A549 (cell line): ENCODE measurements at regions of chr15 and their contacts with region 1.

Region 1: GRCh38 chr15:89101302-89102191 is 13.3 kb downstream of the ABHD2 start:
- DNase-seq: peak; percentile 97 to 98
- ATAC-seq: peak; percentile 92 to 93
- H3K4me3 ChIP-seq: no peak overlapping the region; the same call in 2 of the 3 replicates
- H3K27ac ChIP-seq: peak overlapping the region; percentile 85 to 88
- H3K4me1 ChIP-seq: peaks cover 99% of the 10 kb centered on the region
- CTCF ChIP-seq: no peak
- EP300 ChIP-seq: peak; percentile 69 to 71; a peak in 2 of 5 replicates
- POLR2A ChIP-seq: no peak
- RAD21 ChIP-seq: peak; percentile 8 to 24; a peak in 1 of 5 replicates

Region 2: DNA sequence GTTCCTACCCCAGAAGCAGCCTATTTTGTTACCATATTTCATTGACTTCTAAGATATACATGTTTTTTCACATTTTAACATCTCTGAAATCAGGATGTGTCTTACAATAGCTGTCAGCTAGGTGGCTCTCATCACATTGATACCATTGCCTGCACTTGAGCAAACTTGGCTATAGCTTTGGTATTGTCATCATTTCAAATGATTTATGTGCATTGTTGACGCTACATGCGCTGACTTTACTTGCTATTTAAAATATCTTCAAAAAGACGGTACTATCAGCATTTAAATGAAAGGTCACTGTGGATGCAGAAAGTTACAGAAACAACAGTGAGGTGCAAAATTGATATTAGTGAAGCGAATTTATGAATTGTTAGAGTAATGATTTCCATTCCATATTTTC is 67.3 kb before region 1 on chr15:
- CTCF ChIA-PET with region 1: no interaction called
- POLR2A ChIA-PET with region 1: no interaction called
- DNase-seq: peak; percentile 54 to 62
- ATAC-seq: peak; percentile 56 to 76; a peak in 5 of 6 replicates
- H3K4me3 ChIP-seq: no peak overlapping the region
- H3K27ac ChIP-seq: no peak overlapping the region
- H3K4me1 ChIP-seq: no peaks in the 10 kb centered on the region
- CTCF ChIP-seq: peak; percentile 62
- EP300 ChIP-seq: no peak
- POLR2A ChIP-seq: no peak
- RAD21 ChIP-seq: peak; percentile 63 to 78

Region 3: DNA sequence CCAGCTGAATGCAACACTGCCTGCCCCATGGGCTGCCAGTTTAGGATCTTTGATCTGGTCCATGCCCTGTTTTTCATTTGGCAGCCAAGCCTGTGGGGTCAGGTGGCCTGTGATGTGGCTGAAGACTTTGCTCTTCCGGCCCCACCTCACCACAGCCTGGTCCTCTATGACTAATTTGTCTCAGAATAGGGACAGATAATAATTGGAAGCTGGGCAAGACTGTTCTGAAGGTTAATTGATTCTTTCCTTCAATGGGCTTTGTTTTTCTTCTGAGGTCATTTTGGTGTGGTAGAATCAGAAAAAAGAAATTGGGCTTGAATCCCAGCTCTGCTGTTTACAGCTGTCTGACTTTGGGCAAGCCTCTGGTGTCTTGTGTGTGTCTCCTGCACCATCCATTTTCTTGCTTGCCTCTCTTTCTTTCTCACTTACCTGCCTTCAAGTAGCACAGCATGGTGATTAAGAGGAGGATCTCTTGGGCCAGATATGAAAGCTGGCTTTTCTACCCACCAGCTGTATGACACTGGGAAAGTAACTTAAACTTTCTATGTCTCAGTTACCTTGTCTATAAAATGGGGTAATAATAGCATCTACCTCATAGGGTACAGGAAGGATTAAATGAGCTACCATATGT is 10.9 kb after region 1 on chr15:
- CTCF ChIA-PET with region 1: interaction called, 187 read pairs
- POLR2A ChIA-PET with region 1: interaction called, 10 read pairs
- DNase-seq: peak in 1 of 2 experiments; percentile 71
- ATAC-seq: peak; percentile 55 to 65; a peak in 4 of 6 replicates
- H3K4me3 ChIP-seq: no peak overlapping the region
- H3K27ac ChIP-seq: peak overlapping the region; percentile 87 to 95
- H3K4me1 ChIP-seq: peaks cover 85% of the 10 kb centered on the region
- CTCF ChIP-seq: no peak
- EP300 ChIP-seq: 0 out of 5 replicates have a peak, but pooled peaks of 1 of the 2 experiments have one; percentile 16
- POLR2A ChIP-seq: no peak
- RAD21 ChIP-seq: no peak

Region 4: DNA sequence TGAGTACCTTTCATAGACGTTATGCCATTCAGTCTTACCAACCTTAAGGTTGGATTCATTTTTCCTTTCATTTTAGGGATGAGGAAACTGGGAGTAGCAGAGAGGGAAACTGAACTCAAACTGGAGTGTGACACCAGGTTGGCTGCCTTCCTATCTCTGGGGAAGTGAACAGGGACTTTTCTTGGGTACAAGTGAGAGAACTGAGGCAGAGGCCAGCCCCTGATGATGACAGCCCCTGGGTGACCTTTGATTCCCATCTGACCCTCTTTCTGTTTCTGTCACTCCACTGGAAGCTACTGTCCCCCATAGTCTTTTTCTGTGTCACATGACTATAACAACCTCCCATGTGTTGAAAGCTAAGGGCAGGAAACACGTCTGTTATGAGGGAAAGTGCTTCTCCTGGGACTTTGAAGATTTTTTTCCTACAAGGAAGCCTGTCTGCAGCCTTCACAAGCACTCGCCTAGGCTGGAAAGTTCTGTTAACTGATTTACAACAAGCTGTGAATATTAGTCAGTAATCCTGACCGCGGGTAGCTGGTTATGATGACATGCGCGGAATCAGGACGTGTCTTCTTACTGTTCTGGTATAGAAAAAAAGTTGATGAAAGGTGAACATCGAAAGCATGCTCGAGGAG is 18.1 kb after region 1 on chr15:
- CTCF ChIA-PET with region 1: interaction called, 187 read pairs
- POLR2A ChIA-PET with region 1: interaction called, 12 read pairs
- DNase-seq: peak; percentile 91 to 95
- ATAC-seq: peak; percentile 77 to 88
- H3K4me3 ChIP-seq: peak overlapping the region; percentile 16; the same call in 2 of the 3 replicates
- H3K27ac ChIP-seq: peak overlapping the region; percentile 87 to 95
- H3K4me1 ChIP-seq: peaks cover 96% of the 10 kb centered on the region
- CTCF ChIP-seq: no peak
- EP300 ChIP-seq: no peak
- POLR2A ChIP-seq: no peak
- RAD21 ChIP-seq: no peak; a peak in 1 of 5 replicates